Ovary (tissue), 10 donors: ENCODE measurements at regions of chr1 and their contacts with region 1.

Region 1: GRCh38 chr1:115577513-115577912 is 64.3 kb upstream of the VANGL1 start:
- DNase-seq: no peak
- H3K4me3 ChIP-seq: no peak overlapping the region
- H3K27ac ChIP-seq: no peak overlapping the region
- H3K4me1 ChIP-seq: no peaks in the 10 kb centered on the region
- H3K27me3 ChIP-seq: no peaks in the 10 kb centered on the region
- CTCF ChIP-seq: no peak
- EP300 ChIP-seq: no peak
- POLR2A ChIP-seq: no peak

Region 2: DNA sequence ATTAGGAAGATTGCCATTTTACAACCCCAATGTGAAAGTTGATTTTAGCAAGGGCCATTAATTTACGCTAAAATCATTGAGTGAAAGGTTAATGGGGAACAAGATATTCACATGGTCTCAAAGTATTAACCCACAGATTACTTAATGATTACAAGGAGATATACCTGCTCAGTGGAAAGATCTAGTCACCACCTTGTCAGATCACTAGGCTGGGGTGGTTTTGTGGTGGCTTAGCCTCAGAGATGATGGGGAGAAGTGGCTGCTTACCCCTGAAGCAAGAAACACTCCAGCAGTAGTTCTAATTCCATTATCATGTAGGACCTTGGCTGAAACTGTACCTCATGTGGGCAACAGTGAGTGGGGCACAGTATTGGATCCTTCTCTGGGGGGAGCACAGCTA is 1046.4 kb before region 1 on chr1:
- intact Hi-C with region 1: loop called in 1 of 4 experiments (anchors 5 kb)
- DNase-seq: no peak
- H3K4me3 ChIP-seq: no peak overlapping the region
- H3K27ac ChIP-seq: no peak overlapping the region
- H3K4me1 ChIP-seq: no peaks in the 10 kb centered on the region
- H3K27me3 ChIP-seq: no peaks in the 10 kb centered on the region
- CTCF ChIP-seq: no peak
- EP300 ChIP-seq: no peak
- POLR2A ChIP-seq: no peak

Region 3: DNA sequence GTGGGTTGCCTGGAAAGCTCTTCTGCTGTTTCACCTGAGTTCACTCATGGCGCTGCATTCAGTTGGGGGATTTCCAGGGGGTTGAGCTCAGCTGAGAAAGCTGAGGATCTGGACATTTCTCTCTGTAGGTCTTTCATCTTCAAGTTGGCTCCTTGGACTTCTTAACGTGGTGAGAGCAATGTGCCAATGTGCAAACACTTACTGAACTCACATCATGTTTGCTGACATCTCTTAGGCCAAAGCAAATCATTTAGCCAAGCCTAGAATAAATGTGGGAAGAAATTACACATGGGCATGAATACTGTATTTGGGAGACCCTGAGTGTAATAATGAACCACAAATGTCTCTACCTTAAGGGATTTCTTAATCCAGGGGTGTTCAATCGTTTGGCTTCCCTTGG is 356.1 kb after region 1 on chr1:
- intact Hi-C with region 1: no loop called
- DNase-seq: no peak
- H3K4me3 ChIP-seq: no peak overlapping the region
- H3K27ac ChIP-seq: no peak overlapping the region
- H3K4me1 ChIP-seq: no peaks in the 10 kb centered on the region
- H3K27me3 ChIP-seq: no peaks in the 10 kb centered on the region
- CTCF ChIP-seq: no peak
- EP300 ChIP-seq: no peak
- POLR2A ChIP-seq: no peak